CD4-positive, alpha-beta T cell (primary cell): ENCODE measurements at regions of chr5 and their contacts with region 1.

Region 1: DNA sequence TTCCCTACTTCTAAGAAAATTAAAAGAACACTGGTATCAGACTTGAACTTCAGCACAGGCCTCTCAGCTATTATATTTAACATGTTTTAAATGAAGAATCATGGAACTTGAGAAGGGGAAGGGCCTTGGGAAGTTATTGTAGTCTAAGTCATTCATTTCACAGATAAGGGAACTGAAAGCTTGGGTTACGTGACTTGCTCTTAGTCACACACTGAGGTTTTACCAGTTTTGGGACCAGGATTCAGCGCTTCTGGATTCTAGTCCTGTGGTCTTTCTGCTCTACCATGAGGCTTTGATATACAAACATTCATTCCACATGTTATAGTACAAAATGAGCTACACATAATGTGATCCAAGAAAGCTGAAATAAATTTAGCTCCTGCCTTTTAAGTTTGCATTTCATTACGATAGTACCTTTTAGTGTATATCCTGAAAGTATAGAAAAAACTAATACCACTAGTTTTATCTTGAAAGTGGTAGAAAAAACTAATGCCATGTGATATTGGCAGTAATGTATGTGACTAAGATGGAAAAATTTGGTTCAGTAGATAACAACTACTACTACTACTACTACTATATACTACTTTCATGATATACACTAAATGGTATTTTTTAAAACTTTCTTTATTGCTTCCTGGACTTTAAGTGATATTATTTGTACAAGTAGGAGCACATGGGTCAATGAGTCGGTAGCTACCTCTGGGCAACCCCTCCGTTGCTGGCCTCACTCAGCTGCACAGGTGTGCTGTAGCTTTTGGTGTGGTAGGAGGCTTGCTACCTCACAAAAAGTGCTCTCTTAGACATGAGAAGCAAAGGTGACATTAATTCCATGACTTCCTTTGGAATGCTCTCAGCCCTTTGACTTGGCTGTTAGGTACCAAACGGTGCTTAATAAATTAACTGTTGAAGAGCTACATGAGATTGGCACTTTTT is 40.7 kb downstream of the F2RL2 start:
- DNase-seq: peak in 3 of 14 experiments; percentile 8 to 65 (median 57)
- ATAC-seq: no peak
- H3K4me3 ChIP-seq: no peak overlapping the region
- H3K4me3 Mint-ChIP-seq: no peak overlapping the region
- H3K27ac ChIP-seq: peak overlapping the region in 1 of 2 donors; percentile 7
- H3K27ac Mint-ChIP-seq: peak overlapping the region; percentile 57
- H3K4me1 ChIP-seq: peaks cover 3% of the 10 kb centered on the region
- H3K4me1 Mint-ChIP-seq: peaks cover 28% of the 10 kb centered on the region
- H3K27me3 ChIP-seq: no peaks in the 10 kb centered on the region
- H3K27me3 Mint-ChIP-seq: no peaks in the 10 kb centered on the region
- CTCF ChIP-seq: no peak

Region 2: GRCh38 chr5:76074487-76075065 is 507.9 kb before region 1 on chr5:
- CTCF ChIA-PET with region 1: no interaction called
- POLR2A ChIA-PET with region 1: no interaction called
- intact Hi-C with region 1: loop called in 1 of 2 experiments (anchors 2 kb)
- DNase-seq: peak in 5 of 14 experiments; percentile 9 to 50 (median 42)
- ATAC-seq: peak; percentile 66
- H3K4me3 ChIP-seq: no peak overlapping the region
- H3K4me3 Mint-ChIP-seq: no peak overlapping the region
- H3K27ac ChIP-seq: no peak overlapping the region
- H3K27ac Mint-ChIP-seq: no peak overlapping the region
- H3K4me1 ChIP-seq: no peaks in the 10 kb centered on the region
- H3K4me1 Mint-ChIP-seq: no peaks in the 10 kb centered on the region
- H3K27me3 ChIP-seq: peaks cover 8 to 15% of the 10 kb centered on the region in 2 experiments
- H3K27me3 Mint-ChIP-seq: peaks cover 89% of the 10 kb centered on the region
- CTCF ChIP-seq: peak; percentile 41

Region 3: DNA sequence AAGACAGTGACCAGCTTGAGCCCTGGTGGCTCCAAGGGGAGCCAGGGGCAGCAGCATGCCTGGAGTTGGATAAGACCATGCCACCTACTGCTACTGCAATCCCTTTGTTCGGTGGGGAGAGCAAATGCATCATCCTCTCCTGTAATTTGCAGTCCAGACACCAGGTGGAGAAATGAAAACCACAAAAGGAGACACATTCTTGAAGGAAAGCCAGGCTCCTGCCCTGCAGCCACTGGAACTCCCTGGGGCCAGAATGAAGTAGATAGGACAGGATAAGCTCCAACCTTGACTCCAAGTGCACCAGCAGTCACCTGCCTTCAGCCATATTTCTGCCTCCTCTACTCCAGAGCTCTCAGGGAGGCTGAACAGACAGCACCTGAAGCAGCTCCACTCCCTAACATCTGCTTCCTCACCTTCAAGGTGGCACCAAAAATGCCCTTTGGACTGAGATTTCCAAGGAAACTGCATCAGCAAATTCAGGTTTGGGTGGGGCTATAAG is 244.5 kb before region 1 on chr5:
- CTCF ChIA-PET with region 1: interaction called, 4 read pairs
- POLR2A ChIA-PET with region 1: no interaction called
- intact Hi-C with region 1: loop called (anchors 1 to 5 kb)
- DNase-seq: peak in 12 of 14 experiments; percentile 8 to 80 (median 25)
- ATAC-seq: peak; percentile 82
- H3K4me3 ChIP-seq: no peak overlapping the region
- H3K4me3 Mint-ChIP-seq: no peak overlapping the region
- H3K27ac ChIP-seq: no peak overlapping the region
- H3K27ac Mint-ChIP-seq: no peak overlapping the region
- H3K4me1 ChIP-seq: peaks cover 23% of the 10 kb centered on the region
- H3K4me1 Mint-ChIP-seq: peaks cover 38% of the 10 kb centered on the region
- H3K27me3 ChIP-seq: no peaks in the 10 kb centered on the region
- H3K27me3 Mint-ChIP-seq: no peaks in the 10 kb centered on the region
- CTCF ChIP-seq: peak; percentile 72

Region 4: DNA sequence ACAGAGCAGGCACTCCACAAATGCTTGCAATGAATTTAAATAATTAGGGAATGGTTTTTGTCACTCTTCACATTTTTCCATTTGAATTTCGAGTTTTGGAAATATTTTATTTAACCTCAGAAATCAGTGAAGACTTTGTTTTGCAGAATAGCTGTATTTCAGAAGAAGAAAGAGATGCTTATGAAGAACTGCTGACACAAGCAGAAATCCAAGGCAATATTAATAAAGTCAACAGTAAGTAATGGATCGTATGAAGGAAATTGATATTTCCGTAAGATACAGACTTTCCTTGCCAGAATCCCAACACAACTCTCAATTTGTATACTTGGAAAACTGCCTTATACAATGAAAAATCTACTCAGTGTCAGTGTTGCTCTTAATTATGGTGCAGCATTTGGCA is 10.2 kb after region 1 on chr5:
- CTCF ChIA-PET with region 1: no interaction called
- POLR2A ChIA-PET with region 1: no interaction called
- intact Hi-C with region 1: no loop called
- DNase-seq: no peak
- ATAC-seq: no peak
- H3K4me3 ChIP-seq: no peak overlapping the region
- H3K4me3 Mint-ChIP-seq: no peak overlapping the region
- H3K27ac ChIP-seq: no peak overlapping the region
- H3K27ac Mint-ChIP-seq: no peak overlapping the region
- H3K4me1 ChIP-seq: no peaks in the 10 kb centered on the region
- H3K4me1 Mint-ChIP-seq: no peaks in the 10 kb centered on the region
- H3K27me3 ChIP-seq: no peaks in the 10 kb centered on the region
- H3K27me3 Mint-ChIP-seq: no peaks in the 10 kb centered on the region
- CTCF ChIP-seq: no peak